Vagina (tissue), 2 donors: ENCODE measurements at regions of chr15 and their contacts with region 1.

Region 1: DNA sequence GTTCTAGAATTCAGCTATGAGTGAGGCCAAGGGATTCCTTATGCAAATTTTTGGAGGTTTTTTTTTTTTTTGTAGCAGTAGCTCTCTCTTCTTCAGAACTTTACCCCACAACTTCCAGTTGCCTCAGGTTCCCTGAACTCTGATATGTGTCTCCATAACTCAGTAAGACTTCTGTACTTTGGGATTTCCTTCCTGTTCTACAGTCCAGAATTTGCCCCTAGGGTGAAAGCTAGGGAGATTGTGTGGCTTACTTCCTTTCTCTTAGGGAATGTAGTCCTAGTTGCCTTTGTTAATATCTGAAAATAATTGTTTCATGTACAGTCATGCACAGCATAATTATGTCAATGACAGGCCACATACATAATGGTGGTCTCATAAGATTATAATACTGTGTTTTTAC is 30.8 kb downstream of the LRRC28 start:
- DNase-seq: no peak
- H3K4me3 ChIP-seq: no peak overlapping the region
- H3K27ac ChIP-seq: no peak overlapping the region
- H3K4me1 ChIP-seq: no peaks in the 10 kb centered on the region
- H3K27me3 ChIP-seq: no peaks in the 10 kb centered on the region
- CTCF ChIP-seq: no peak
- POLR2A ChIP-seq: no peak

Region 2: GRCh38 chr15:97517716-97518115 is 1764.4 kb before region 1 on chr15:
- intact Hi-C with region 1: no loop called
- DNase-seq: no peak
- H3K4me3 ChIP-seq: no peak overlapping the region
- H3K27ac ChIP-seq: no peak overlapping the region
- H3K4me1 ChIP-seq: no peaks in the 10 kb centered on the region
- H3K27me3 ChIP-seq: no peaks in the 10 kb centered on the region
- CTCF ChIP-seq: no peak
- POLR2A ChIP-seq: no peak

Region 3: DNA sequence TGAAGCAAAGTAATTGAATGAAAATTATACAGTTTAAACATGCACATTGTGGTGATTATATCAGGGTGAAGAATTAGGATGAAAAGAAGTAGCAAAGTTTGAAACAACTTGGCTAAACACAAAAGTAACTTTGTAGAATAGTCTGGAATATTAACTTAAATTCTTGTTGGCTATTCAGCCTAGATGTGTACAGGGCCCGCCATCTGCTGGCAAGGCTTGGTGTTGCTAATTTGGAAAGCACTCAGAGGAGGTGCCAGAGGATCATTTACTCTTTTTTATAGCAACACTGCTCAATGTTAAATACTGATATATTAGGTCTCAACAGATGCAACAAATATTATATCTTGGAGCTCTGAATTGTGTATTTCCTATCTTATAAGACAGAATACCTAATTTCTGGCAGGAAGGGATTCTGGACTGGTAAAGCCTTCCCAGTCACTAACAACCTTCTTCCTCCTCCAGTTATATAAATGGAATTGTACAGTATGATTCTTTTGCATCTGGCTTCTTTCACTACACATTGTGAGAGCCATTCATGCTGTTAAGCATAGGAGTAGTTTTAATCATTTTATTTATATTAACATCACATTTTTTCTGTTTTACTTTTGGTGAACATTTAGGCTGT is 68.8 kb before region 1 on chr15:
- intact Hi-C with region 1: no loop called
- DNase-seq: no peak
- H3K4me3 ChIP-seq: no peak overlapping the region
- H3K27ac ChIP-seq: no peak overlapping the region
- H3K4me1 ChIP-seq: no peaks in the 10 kb centered on the region
- H3K27me3 ChIP-seq: no peaks in the 10 kb centered on the region
- CTCF ChIP-seq: peak; percentile 69 to 91 (median 89)
- POLR2A ChIP-seq: no peak

Region 4: DNA sequence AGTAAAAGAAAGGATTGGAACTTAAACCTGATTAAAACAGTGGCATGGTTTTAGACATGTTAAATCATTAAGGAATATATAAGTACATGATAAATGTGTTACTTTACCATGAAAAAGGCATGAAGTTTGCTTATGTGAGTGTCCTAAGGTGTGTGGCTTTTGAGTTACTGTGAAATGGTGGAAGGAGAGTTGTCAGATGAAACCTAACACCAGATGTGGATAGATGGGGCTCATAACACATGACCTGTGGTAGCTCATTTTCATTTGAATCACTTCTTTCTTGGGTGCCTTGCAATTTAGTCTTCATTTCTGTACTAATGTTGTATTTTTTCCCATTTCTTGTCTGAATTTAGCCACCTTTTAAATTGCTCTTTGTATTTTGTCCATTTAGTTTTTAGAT is 296.7 kb after region 1 on chr15:
- intact Hi-C with region 1: loop called (anchors 10 kb)
- DNase-seq: no peak
- H3K4me3 ChIP-seq: no peak overlapping the region
- H3K27ac ChIP-seq: no peak overlapping the region
- H3K4me1 ChIP-seq: peaks cover 65% of the 10 kb centered on the region
- H3K27me3 ChIP-seq: no peaks in the 10 kb centered on the region
- CTCF ChIP-seq: no peak
- POLR2A ChIP-seq: no peak